ENCODE measurements at regions of chr20 and their contacts with region 1.

Region 1: GRCh38 chr20:34915749-34916455 is 39.5 kb downstream of the ACSS2 start:
- DNase-seq: no peak
- H3K4me3 ChIP-seq: no peak overlapping the region
- H3K4me3 Mint-ChIP-seq: no peak overlapping the region
- H3K27ac ChIP-seq: no peak overlapping the region
- H3K27ac Mint-ChIP-seq: peak overlapping the region in 1 of 7 donors; percentile 45
- H3K4me1 ChIP-seq: no peaks in the 10 kb centered on the region
- H3K4me1 Mint-ChIP-seq: peaks cover 9% of the 10 kb centered on the region
- H3K27me3 ChIP-seq: no peaks in the 10 kb centered on the region
- H3K27me3 Mint-ChIP-seq: no peaks in the 10 kb centered on the region
- CTCF ChIP-seq: no peak

Region 2: GRCh38 chr20:34271961-34272360 is 643.9 kb before region 1 on chr20:
- intact Hi-C with region 1: loop called in 1 of 2 experiments (anchors 5 kb)
- DNase-seq: no peak
- H3K4me3 ChIP-seq: no peak overlapping the region
- H3K4me3 Mint-ChIP-seq: no peak overlapping the region
- H3K27ac ChIP-seq: no peak overlapping the region
- H3K27ac Mint-ChIP-seq: no peak overlapping the region
- H3K4me1 ChIP-seq: peaks cover 9 to 12% of the 10 kb centered on the region in 2 donors
- H3K4me1 Mint-ChIP-seq: peaks cover 8% of the 10 kb centered on the region
- H3K27me3 ChIP-seq: peaks cover 0 to 4% of the 10 kb centered on the region in 2 donors
- H3K27me3 Mint-ChIP-seq: peaks cover 7 to 15% (median 9%) of the 10 kb centered on the region in 3 donors
- CTCF ChIP-seq: no peak